ENCODE measurements at regions of chr15 and their contacts with region 1.

Region 1: GRCh38 chr15:75994220-75994619 is 18.0 kb downstream of the NRG4 start:
- DNase-seq: no peak
- H3K4me3 ChIP-seq: no peak overlapping the region
- H3K27ac ChIP-seq: no peak overlapping the region
- H3K4me1 ChIP-seq: no peaks in the 10 kb centered on the region
- H3K27me3 ChIP-seq: no peaks in the 10 kb centered on the region
- CTCF ChIP-seq: no peak
- POLR2A ChIP-seq: no peak

Region 2: DNA sequence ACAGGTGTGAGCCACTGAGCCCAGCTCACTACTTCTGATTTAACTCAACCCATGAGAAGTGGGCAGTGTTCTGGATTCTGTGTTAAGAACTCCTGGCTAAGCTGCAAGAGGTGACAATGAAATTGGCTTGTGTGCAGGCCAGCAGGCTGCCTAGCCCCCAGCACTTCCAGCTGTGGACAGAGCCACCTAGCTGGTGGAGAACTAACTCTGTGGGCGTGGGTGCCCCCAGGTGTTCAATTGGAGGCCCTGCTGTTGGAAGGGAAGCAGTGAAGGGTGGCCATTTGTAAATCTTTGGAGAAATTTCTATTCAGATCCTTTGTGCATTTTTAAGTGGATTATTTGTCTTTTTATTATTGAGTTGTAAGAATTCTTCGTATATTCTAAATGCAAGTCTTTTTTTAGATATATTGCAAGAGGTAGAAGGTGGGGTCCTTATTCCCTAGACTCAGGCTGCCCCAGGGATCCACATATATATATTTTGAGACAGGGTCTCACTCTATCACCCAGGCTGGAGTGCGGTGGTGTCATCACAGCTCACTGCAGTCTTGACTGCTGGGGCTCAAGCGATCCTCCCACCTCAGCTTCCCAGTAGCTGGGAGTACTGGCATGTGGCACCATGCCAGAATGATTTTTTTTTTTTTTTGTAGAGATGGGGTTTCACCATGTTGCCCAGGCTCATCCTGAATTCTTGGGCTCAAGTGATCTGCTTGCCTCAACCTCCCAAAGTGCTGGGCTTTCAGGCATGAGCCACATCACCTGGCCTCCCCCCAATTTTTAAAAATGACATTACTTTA is 1006.0 kb before region 1 on chr15:
- intact Hi-C with region 1: loop called (anchors 10 kb)
- DNase-seq: no peak
- H3K4me3 ChIP-seq: no peak overlapping the region
- H3K27ac ChIP-seq: no peak overlapping the region
- H3K4me1 ChIP-seq: no peaks in the 10 kb centered on the region
- H3K27me3 ChIP-seq: no peaks in the 10 kb centered on the region
- CTCF ChIP-seq: no peak
- POLR2A ChIP-seq: no peak

Region 3: GRCh38 chr15:75955720-75956119 is 38.5 kb before region 1 on chr15:
- intact Hi-C with region 1: no loop called
- DNase-seq: no peak
- H3K4me3 ChIP-seq: no peak overlapping the region
- H3K27ac ChIP-seq: no peak overlapping the region
- H3K4me1 ChIP-seq: no peaks in the 10 kb centered on the region
- H3K27me3 ChIP-seq: no peaks in the 10 kb centered on the region
- CTCF ChIP-seq: no peak
- POLR2A ChIP-seq: no peak